HCT116 (cell line): ENCODE measurements at regions of chr7 and their contacts with region 1.

Region 1: DNA sequence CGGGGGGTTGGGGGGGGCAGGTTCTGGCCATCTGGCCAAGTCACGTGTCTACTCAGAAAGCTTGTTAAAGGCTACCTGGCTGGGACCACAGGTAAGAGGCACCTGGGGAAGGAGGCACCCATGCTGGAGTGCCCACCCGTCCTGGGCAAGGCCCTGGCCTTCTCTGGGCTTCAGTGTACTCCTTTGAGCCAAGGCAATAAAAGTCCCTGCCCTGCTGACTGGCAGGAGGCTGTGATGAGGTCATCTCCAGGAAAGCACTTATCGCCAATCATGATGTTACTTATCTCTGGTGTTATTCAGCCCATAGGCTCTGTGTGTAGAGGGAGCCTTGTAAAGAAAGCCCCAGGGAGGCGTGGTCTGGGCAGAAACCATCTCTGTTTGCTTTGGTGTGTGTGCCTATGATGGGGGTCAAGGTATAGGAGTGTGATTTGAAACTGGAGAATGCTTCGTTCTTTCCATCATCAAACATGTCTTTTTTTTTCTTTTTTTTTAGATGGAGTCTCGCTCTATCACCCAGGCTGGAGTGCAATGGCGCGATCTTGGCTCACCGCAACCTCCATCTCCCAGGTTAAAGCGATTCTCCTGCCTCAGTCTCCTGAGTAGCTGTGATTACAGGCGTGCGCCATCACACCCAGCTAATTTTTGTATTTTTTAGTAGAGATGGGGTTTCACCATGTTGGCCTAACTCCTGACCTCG is 2.5 kb upstream of the CLDN4 start:
- DNase-seq: peak; percentile 90
- ATAC-seq: peak; percentile 51
- H3K4me3 ChIP-seq: peak overlapping the region; percentile 6 to 43; a peak in 3 of 4 replicates
- H3K27ac ChIP-seq: peak overlapping the region; percentile 96
- H3K4me1 ChIP-seq: peaks cover 73 to 97% of the 10 kb centered on the region in 2 experiments
- H3K27me3 ChIP-seq: no peaks in the 10 kb centered on the region
- CTCF ChIP-seq: no peak
- POLR2A ChIP-seq: peak; percentile 55
- RAD21 ChIP-seq: no peak

Region 2: GRCh38 chr7:73726083-73726466 is 102.2 kb before region 1 on chr7:
- CTCF ChIA-PET with region 1: no interaction called
- POLR2A ChIA-PET with region 1: no interaction called
- RAD21 ChIA-PET with region 1: no interaction called
- intact Hi-C with region 1: no loop called
- DNase-seq: no peak
- ATAC-seq: peak; percentile 61
- H3K4me3 ChIP-seq: no peak overlapping the region
- H3K27ac ChIP-seq: no peak overlapping the region
- H3K4me1 ChIP-seq: peaks cover 16 to 29% of the 10 kb centered on the region in 2 experiments
- H3K27me3 ChIP-seq: no peaks in the 10 kb centered on the region
- CTCF ChIP-seq: no peak
- POLR2A ChIP-seq: no peak
- RAD21 ChIP-seq: no peak

Region 3: GRCh38 chr7:73738612-73739374 is 89.5 kb before region 1 on chr7 and contains the start of gene ABHD11:
- CTCF ChIA-PET with region 1: interaction called, 8 read pairs
- POLR2A ChIA-PET with region 1: interaction called, 43 read pairs
- RAD21 ChIA-PET with region 1: interaction called in 1 of 2 experiments, 5 read pairs
- intact Hi-C with region 1: loop called (anchors 2 kb)
- DNase-seq: peak; percentile 95
- ATAC-seq: peak; percentile 68
- H3K4me3 ChIP-seq: peak within 1 kb of the TSS; percentile 81 to 91
- H3K27ac ChIP-seq: peak within 1 kb of the TSS; percentile 95
- H3K4me1 ChIP-seq: peaks cover 52 to 84% of the 10 kb centered on the region in 2 experiments
- H3K27me3 ChIP-seq: no peaks in the 10 kb centered on the region
- CTCF ChIP-seq: no peak
- POLR2A ChIP-seq: peak; percentile 87
- RAD21 ChIP-seq: no peak
- total RNA-seq, gene ABHD11: 69.8 TPM

Region 4: DNA sequence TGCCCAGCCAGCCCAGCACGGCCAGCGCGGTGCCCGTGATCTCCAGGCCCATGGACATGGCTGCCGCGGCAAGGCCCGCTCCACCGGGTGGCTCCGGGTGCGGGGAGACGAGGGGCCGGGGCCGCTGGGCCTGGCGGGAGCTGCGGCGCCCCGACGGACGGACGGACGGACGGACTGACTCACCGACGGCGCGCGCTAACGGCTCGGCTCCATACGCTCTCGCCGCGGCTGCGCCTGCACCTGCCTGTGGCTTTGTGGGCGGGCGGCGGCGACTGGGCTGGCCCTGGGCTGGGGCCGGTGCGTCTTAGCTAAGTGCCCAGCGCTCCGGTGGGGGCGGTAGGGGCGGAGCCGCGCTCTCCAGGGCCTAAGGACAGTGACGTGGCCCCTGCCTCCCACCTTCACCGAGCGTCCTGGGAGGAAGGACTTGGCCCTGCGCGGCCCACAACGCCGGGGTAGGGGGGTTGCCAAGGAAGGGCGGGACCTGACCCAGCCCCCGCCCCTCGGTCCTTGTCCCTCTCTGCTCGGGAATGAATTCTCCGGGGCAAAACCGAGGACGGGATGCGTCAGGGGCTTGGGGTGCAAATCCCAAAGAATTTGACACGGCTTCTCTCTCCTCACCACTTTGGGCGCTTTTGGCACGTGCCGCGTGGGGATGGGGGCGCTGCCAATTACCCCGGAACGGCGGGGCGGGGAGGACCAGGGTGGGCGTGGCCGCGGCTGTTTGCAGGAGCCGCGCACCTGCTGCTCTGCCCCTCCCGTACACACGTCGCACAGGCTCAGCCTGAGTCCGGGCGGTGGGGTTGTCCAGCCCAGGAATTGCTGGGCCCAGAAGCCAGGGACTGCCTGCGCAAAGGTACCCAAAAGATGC is 58.0 kb before region 1 on chr7 and contains the start of gene CLDN3:
- CTCF ChIA-PET with region 1: no interaction called
- POLR2A ChIA-PET with region 1: interaction called, 11 read pairs
- RAD21 ChIA-PET with region 1: no interaction called
- intact Hi-C with region 1: no loop called
- DNase-seq: peak; percentile 73
- ATAC-seq: peak; percentile 94
- H3K4me3 ChIP-seq: peak within 1 kb of the TSS; percentile 44 to 66
- H3K27ac ChIP-seq: peak within 1 kb of the TSS; percentile 78; the same call in 1 of the 2 replicates
- H3K4me1 ChIP-seq: peaks cover 16 to 38% of the 10 kb centered on the region in 2 experiments; a peak in 3 of 4 replicates
- H3K27me3 ChIP-seq: no peaks in the 10 kb centered on the region
- CTCF ChIP-seq: no peak
- POLR2A ChIP-seq: no peak
- RAD21 ChIP-seq: no peak; the same call in 1 of the 2 replicates
- total RNA-seq, gene CLDN3: 19.2 TPM

Region 5: GRCh38 chr7:73799267-73800141 is 28.8 kb before region 1 on chr7:
- CTCF ChIA-PET with region 1: interaction called, 3 read pairs
- POLR2A ChIA-PET with region 1: interaction called, 17 read pairs
- RAD21 ChIA-PET with region 1: interaction called in 1 of 2 experiments, 4 read pairs
- intact Hi-C with region 1: no loop called
- DNase-seq: peak; percentile 78
- ATAC-seq: peak; percentile 84
- H3K4me3 ChIP-seq: peak overlapping the region; percentile 49 to 66
- H3K27ac ChIP-seq: peak overlapping the region; percentile 89
- H3K4me1 ChIP-seq: peaks cover 26 to 48% of the 10 kb centered on the region in 2 experiments
- H3K27me3 ChIP-seq: no peaks in the 10 kb centered on the region
- CTCF ChIP-seq: no peak
- POLR2A ChIP-seq: no peak
- RAD21 ChIP-seq: no peak; the same call in 1 of the 2 replicates

Region 6: DNA sequence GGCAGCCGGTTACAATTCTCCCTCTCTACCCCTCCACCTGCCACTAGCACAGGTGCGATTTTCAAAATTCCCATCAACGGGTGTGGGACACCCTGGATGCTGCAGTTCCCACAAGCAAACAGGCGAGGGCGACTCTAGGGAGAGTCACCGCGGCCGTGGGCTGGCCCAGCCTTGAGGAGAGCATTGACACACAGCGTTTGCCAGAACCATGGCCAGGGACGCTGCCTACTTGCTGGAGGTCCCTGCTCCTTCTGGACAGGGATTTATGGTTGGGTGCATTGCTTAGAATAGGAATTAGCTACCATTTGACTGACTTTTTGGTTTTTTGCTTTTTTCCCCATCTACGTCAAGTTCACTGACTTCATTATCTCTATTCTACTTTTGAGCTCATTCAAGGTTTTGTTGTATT is 16.5 kb before region 1 on chr7:
- CTCF ChIA-PET with region 1: interaction called, 12 read pairs
- POLR2A ChIA-PET with region 1: interaction called, 41 read pairs
- RAD21 ChIA-PET with region 1: interaction called in 1 of 2 experiments, 6 read pairs
- intact Hi-C with region 1: loop called (anchors 2 kb)
- DNase-seq: no peak
- ATAC-seq: peak; percentile 81
- H3K4me3 ChIP-seq: no peak overlapping the region
- H3K27ac ChIP-seq: 0 out of 2 replicates have a peak overlapping the region, but pooled peaks have one; percentile 13
- H3K4me1 ChIP-seq: peaks cover 43 to 70% of the 10 kb centered on the region in 2 experiments
- H3K27me3 ChIP-seq: no peaks in the 10 kb centered on the region
- CTCF ChIP-seq: peak; percentile 54 to 88 (median 87); a peak in 5 of 6 replicates
- POLR2A ChIP-seq: no peak
- RAD21 ChIP-seq: peak; percentile 90

Region 7: GRCh38 chr7:73842247-73842895 is 14.1 kb after region 1 on chr7 and contains the start of gene METTL27:
- CTCF ChIA-PET with region 1: interaction called, 6 read pairs
- POLR2A ChIA-PET with region 1: interaction called, 87 read pairs
- RAD21 ChIA-PET with region 1: interaction called, 6 to 7 read pairs
- intact Hi-C with region 1: no loop called
- DNase-seq: peak; percentile 88
- ATAC-seq: peak; percentile 88
- H3K4me3 ChIP-seq: peak within 1 kb of the TSS; percentile 85 to 93
- H3K27ac ChIP-seq: peak within 1 kb of the TSS; percentile 90
- H3K4me1 ChIP-seq: peaks cover 33 to 59% of the 10 kb centered on the region in 2 experiments
- H3K27me3 ChIP-seq: no peaks in the 10 kb centered on the region
- CTCF ChIP-seq: no peak
- POLR2A ChIP-seq: peak; percentile 71
- RAD21 ChIP-seq: no peak
- total RNA-seq, gene METTL27: 30.4 TPM

Region 8: DNA sequence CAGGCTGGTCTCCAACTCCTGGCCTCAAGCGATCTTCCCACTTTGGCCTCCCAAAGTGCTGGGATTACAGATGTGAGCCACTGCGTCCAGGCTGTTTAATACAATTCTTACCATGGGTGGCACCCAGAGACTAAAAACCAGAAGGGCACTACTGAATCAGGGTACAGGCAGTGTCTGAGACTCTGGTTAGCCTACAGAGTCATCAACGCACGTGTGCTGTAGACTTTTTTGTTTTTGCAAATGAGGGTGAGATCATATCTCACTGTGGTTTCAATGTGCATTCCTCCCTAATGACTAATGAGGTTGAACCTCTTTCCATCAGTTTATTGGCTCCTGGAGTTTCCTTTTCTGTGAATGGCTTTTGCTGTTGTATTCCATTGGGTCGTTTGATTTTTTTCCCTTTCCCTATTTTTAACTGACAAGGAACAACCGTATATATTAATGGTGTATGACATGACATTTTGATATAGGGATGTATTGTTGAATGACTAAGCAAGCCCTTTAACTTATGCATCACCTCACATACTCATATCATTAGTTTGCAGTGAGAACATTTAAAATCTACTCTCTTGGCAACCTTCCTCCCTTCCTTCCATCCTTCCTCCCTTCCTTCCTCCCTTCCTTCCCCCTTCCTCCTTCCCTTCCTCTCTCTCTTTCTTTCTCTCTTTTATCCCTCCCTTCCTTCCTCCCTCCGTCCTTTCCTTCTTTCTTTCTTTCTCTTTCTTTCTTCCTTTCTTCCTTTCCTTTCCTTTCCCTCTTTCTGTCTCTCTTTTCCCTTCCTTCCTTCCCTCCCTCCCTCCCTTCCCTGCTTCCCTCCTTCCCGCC is 23.4 kb after region 1 on chr7:
- CTCF ChIA-PET with region 1: interaction called, 6 read pairs
- POLR2A ChIA-PET with region 1: interaction called, 35 read pairs
- RAD21 ChIA-PET with region 1: interaction called in 1 of 2 experiments, 3 read pairs
- intact Hi-C with region 1: loop called (anchors 1 kb)
- DNase-seq: peak; percentile 92
- ATAC-seq: peak; percentile 66
- H3K4me3 ChIP-seq: peak overlapping the region in 1 of 2 experiments; percentile 16; a peak in 1 of 4 replicates
- H3K27ac ChIP-seq: peak overlapping the region; percentile 94
- H3K4me1 ChIP-seq: peaks cover 43 to 72% of the 10 kb centered on the region in 2 experiments
- H3K27me3 ChIP-seq: no peaks in the 10 kb centered on the region
- CTCF ChIP-seq: no peak
- POLR2A ChIP-seq: no peak
- RAD21 ChIP-seq: no peak

Region 9: DNA sequence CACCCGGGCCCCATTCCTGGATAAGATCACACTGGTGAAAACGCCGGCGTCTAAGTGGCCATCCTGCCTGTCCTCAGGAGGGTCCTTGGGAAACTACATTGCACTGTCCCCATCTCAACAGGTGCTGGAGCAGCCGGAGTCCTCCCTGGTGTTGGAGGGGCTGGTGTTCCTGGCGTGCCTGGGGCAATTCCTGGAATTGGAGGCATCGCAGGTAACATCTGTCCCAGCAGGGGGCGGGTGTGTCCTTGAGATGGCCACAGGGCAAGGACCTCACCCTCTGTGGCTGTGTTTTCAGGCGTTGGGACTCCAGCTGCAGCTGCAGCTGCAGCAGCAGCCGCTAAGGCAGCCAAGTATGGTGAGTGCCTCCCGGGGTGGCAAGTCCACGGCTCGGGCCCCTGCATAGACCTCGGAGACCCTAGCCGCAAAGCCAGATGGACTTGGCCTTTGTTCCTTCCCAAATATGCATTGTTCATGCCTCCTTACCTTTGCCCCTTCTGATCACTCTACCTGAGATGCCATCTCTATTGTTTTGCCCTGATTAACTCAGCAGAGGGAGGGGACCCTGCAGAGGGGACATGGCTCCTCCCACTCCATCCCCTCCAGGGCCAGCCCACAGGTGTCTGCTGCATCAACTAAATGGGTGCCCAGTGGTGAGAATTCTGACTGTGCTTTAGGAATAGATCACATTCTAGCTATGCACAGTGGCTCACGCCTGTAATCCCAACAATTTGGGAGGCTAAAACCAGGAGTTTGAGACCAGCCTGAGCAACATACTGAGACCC is 223.6 kb after region 1 on chr7:
- CTCF ChIA-PET with region 1: no interaction called
- POLR2A ChIA-PET with region 1: no interaction called
- RAD21 ChIA-PET with region 1: no interaction called
- intact Hi-C with region 1: no loop called
- DNase-seq: peak; percentile 34
- ATAC-seq: peak; percentile 93
- H3K4me3 ChIP-seq: no peak overlapping the region
- H3K27ac ChIP-seq: no peak overlapping the region
- H3K4me1 ChIP-seq: peaks cover 2 to 7% of the 10 kb centered on the region in 2 experiments; a peak in 2 of 4 replicates
- H3K27me3 ChIP-seq: peaks cover 4% of the 10 kb centered on the region; the same call in 1 of the 2 replicates
- CTCF ChIP-seq: peak; percentile 60 to 77 (median 64)
- POLR2A ChIP-seq: no peak
- RAD21 ChIP-seq: peak; percentile 91